Activated T-helper 1 cell treated with anti-CD3 and anti-CD28 coated beads, Interleukin-12 subunit alpha, Interleukin-12 subunit beta, Interleukin-2, Interleukin-4 antibody, amounts not matched to agents 30 ng/mL and 10 ng/mL and 1 ng/mL, durations not matched to agents 14 hours and 24 hours and 36 hours (primary cell): ENCODE measurements at regions of chr3 and their contacts with region 1.

Region 1: DNA sequence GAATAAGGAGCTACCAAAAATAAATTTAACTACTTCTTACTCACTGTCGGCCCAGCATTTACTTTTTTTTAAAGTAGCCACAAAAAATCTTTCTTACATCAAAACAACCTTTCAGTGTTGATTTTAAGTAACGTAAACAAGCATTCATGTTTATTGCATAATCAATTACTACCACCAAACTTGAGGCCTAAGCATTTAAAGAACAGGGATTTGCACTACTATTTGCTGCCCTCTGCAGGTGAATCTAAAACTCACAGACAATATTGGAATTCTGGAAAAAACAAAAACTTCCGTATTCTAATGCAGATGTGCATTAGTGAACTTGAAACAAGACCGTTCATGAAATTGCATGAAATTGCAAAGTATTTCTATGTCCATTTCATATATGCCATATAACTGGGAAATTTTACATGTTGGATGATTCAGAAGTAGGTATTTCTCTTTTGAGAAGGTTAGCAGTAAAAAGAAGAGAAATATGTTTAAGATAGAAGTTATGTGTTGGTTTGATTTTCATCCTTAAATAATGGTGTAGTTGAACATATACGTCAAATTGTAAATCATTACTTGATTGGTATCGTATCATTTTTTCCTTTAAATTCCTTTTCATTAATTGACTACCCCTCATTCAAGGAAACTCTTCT is 55.6 kb downstream of the CGGBP1 start:
- DNase-seq: no peak
- H3K4me3 Mint-ChIP-seq: no peak overlapping the region
- H3K27ac Mint-ChIP-seq: no peak overlapping the region
- H3K4me1 Mint-ChIP-seq: peaks cover 14% of the 10 kb centered on the region
- H3K27me3 Mint-ChIP-seq: peaks cover 17% of the 10 kb centered on the region

Region 2: DNA sequence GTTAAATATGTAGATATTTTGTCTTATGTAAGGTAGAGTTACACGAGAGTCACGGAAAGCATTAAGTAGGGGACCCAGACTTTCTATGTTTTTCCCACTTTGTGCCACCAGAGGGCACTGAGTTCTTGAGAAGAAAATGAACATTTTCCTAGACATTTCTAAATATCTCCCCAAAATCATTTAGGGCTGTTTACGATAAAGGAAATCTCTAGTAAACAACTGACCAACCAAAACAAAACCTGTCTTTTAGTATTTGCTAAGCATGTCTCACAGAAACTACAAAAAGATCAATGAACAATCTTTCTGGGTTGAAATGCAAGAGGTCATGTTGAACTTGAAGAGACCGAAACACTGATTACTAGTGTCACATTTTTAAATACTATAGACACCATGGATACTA is 743.0 kb before region 1 on chr3:
- intact Hi-C with region 1: loop called (anchors 5 kb)
- DNase-seq: no peak
- H3K4me3 Mint-ChIP-seq: no peak overlapping the region
- H3K27ac Mint-ChIP-seq: no peak overlapping the region
- H3K4me1 Mint-ChIP-seq: peaks cover 7% of the 10 kb centered on the region
- H3K27me3 Mint-ChIP-seq: peaks cover 8% of the 10 kb centered on the region

Region 3: GRCh38 chr3:87350364-87351199 is 652.7 kb before region 1 on chr3:
- intact Hi-C with region 1: loop called (anchors 1 kb)
- DNase-seq: no peak
- H3K4me3 Mint-ChIP-seq: no peak overlapping the region
- H3K27ac Mint-ChIP-seq: no peak overlapping the region
- H3K4me1 Mint-ChIP-seq: no peaks in the 10 kb centered on the region
- H3K27me3 Mint-ChIP-seq: peaks cover 9% of the 10 kb centered on the region

Region 4: GRCh38 chr3:87674397-87675161 is 328.7 kb before region 1 on chr3:
- intact Hi-C with region 1: loop called (anchors 10 kb)
- DNase-seq: no peak
- H3K4me3 Mint-ChIP-seq: no peak overlapping the region
- H3K27ac Mint-ChIP-seq: no peak overlapping the region
- H3K4me1 Mint-ChIP-seq: no peaks in the 10 kb centered on the region
- H3K27me3 Mint-ChIP-seq: no peaks in the 10 kb centered on the region

Region 5: GRCh38 chr3:87792534-87793336 is 210.5 kb before region 1 on chr3:
- intact Hi-C with region 1: loop called (anchors 5 kb)
- DNase-seq: no peak
- H3K4me3 Mint-ChIP-seq: peak within 1 kb of the TSS; percentile 77
- H3K27ac Mint-ChIP-seq: no peak within 1 kb of the TSS
- H3K4me1 Mint-ChIP-seq: peaks cover 18% of the 10 kb centered on the region
- H3K27me3 Mint-ChIP-seq: peaks cover 43% of the 10 kb centered on the region

Region 6: DNA sequence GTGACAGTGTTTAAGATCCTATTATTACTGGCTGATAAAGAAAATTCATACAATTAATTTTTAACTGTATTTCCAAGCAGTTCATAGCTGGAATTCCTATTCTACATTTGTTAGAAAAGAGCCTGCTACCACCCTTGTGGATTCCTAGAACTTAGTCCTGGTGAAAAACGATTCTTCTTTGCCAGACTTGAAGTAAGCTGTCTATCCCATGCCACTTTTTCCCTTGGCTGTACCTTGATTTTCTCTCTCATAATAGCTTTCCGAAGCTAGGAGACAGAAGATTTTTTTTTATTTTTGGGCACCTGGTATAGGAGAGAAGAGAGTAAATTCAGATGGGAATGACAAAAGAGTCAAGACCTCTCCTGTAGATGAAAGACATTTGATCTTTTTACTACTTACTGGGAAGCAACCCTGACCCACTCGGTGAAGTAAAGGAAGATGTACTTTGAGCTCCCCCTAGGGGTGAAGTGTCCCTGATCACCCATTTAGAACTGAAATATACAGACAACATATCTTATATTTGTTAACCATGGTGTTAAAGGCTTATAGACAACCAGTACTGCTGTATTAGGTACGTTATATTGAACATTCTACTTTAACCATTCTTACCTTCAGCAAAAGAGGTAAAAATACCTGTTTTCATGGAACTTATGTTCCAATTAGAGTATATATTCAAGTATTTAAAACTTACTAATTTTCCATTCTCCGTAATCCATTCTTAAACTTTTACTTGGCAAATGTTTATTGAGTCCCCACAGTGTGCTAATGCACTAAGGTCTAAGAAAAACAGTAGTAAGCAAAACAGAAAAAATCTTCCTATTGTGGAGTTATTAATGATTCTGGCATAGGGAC is 110.3 kb after region 1 on chr3:
- intact Hi-C with region 1: loop called (anchors 1 kb)
- DNase-seq: peak; percentile 44
- H3K4me3 Mint-ChIP-seq: no peak overlapping the region
- H3K27ac Mint-ChIP-seq: no peak overlapping the region
- H3K4me1 Mint-ChIP-seq: peaks cover 17% of the 10 kb centered on the region
- H3K27me3 Mint-ChIP-seq: no peaks in the 10 kb centered on the region